GM12878 (cell line): ENCODE measurements at regions of chr20 and their contacts with region 1.

Region 1: DNA sequence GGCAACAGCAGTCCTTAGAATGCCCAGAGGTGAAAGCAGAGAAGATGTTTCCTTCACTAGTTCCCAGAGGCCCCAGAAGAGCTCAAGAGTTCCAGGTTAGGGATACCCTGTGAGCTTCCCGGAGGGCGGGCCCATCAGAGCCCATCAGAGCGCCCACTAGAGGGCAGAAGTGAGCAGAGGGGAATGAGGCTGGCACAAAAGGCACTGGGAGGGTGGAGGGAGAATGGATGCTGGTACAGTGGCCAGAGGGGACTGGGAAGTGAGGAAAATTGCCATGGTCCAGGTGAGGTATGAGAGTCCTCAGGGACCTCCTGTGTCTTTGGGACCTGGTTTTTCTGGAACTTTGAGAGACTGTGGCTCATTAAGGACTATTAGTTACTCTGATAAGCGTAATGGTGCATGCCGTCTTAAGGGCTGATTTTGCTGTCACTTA is 57.3 kb downstream of the LINC00237 start:
- DNase-seq: no peak
- ATAC-seq: peak; percentile 93
- H3K4me3 ChIP-seq: no peak overlapping the region
- H3K27ac ChIP-seq: no peak overlapping the region
- H3K4me1 ChIP-seq: no peaks in the 10 kb centered on the region
- H3K27me3 ChIP-seq: no peaks in the 10 kb centered on the region; a peak in 1 of 4 replicates
- CTCF ChIP-seq: peak; percentile 69 to 96 (median 92)
- EP300 ChIP-seq: no peak
- POLR2A ChIP-seq: no peak
- RAD21 ChIP-seq: peak; percentile 65

Region 2: GRCh38 chr20:20837574-20838021 is 211.3 kb before region 1 on chr20:
- CTCF ChIA-PET with region 1: interaction called, 12 read pairs
- POLR2A ChIA-PET with region 1: no interaction called
- RAD21 ChIA-PET with region 1: no interaction called
- SMC1A ChIA-PET with region 1: no interaction called
- in situ Hi-C with region 1: no loop called
- intact Hi-C with region 1: no loop called
- DNase-seq: no peak
- ATAC-seq: peak; percentile 36; the same call in 1 of the 3 replicates
- H3K4me3 ChIP-seq: no peak overlapping the region
- H3K27ac ChIP-seq: no peak overlapping the region
- H3K4me1 ChIP-seq: no peaks in the 10 kb centered on the region
- H3K27me3 ChIP-seq: peaks cover 0 to 2% of the 10 kb centered on the region in 2 experiments; a peak in 2 of 4 replicates
- CTCF ChIP-seq: peak; percentile 39 to 57 (median 45)
- EP300 ChIP-seq: no peak
- POLR2A ChIP-seq: no peak
- RAD21 ChIP-seq: peak; percentile 52

Region 3: DNA sequence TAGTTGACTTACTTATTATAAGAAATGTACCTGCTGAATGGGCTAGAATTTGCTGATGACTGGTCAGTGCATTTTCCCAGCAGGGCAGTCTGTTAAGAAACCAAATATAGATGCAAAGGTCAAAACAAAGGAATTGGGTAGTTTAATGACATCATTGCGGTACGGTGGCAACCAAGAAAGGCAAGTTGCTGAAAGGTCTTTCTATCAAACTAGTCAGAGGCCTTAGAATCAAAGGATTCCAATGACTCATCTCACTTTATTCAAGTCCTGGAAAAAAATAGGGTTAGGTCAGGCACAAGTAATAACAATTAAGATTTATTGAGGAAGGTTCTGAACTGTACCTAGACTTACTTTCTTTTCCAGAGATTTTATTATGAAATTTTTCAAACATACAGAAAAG is 153.4 kb after region 1 on chr20:
- CTCF ChIA-PET with region 1: no interaction called
- POLR2A ChIA-PET with region 1: no interaction called
- RAD21 ChIA-PET with region 1: no interaction called
- SMC1A ChIA-PET with region 1: no interaction called
- in situ Hi-C with region 1: no loop called
- intact Hi-C with region 1: no loop called
- DNase-seq: no peak
- ATAC-seq: no peak
- H3K4me3 ChIP-seq: no peak overlapping the region
- H3K27ac ChIP-seq: no peak overlapping the region
- H3K4me1 ChIP-seq: no peaks in the 10 kb centered on the region
- H3K27me3 ChIP-seq: no peaks in the 10 kb centered on the region
- CTCF ChIP-seq: no peak
- EP300 ChIP-seq: no peak
- POLR2A ChIP-seq: no peak
- RAD21 ChIP-seq: no peak